ENCODE measurements at regions of chr3 and their contacts with region 1.

Region 1: DNA sequence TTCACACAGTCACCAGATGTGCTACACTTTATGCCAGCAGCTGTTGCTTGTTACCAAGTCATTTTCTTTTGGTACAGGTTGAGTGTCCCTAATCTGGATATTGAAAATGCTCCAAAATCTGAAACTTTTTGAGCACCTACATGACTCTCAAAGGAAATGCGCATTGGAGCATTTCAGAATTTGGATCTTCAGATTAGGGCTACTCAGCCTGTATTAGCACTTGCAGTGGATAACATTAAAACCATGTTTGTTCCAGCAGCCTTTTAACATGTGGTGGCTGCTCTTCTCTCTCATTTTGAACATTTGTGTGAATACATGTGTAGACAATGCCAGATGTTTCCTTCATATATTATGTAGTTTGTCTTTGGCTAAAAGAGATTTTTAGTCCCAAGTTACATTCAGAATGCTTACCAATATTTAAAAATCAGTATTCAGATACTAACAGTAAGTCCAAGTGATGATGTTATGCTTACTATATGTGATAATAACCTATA is 230.9 kb upstream of the UBE2E1 start:
- DNase-seq: no peak
- ATAC-seq: no peak
- H3K4me3 ChIP-seq: no peak overlapping the region
- H3K27ac ChIP-seq: no peak overlapping the region
- H3K4me1 ChIP-seq: no peaks in the 10 kb centered on the region; the same call in 1 of the 2 replicates
- H3K27me3 ChIP-seq: no peaks in the 10 kb centered on the region
- CTCF ChIP-seq: no peak
- POLR2A ChIP-seq: no peak
- RAD21 ChIP-seq: no peak

Region 2: GRCh38 chr3:23264413-23264812 is 310.5 kb before region 1 on chr3:
- CTCF ChIA-PET with region 1: no interaction called
- POLR2A ChIA-PET with region 1: no interaction called
- dilution Hi-C with region 1: no loop called
- in situ Hi-C with region 1: no loop called
- intact Hi-C with region 1: no loop called
- DNase-seq: peak; percentile 80
- ATAC-seq: peak; percentile 72
- H3K4me3 ChIP-seq: no peak overlapping the region
- H3K27ac ChIP-seq: no peak overlapping the region
- H3K4me1 ChIP-seq: peaks cover 6% of the 10 kb centered on the region; the same call in 1 of the 2 replicates
- H3K27me3 ChIP-seq: no peaks in the 10 kb centered on the region
- CTCF ChIP-seq: no peak
- POLR2A ChIP-seq: no peak
- RAD21 ChIP-seq: no peak

Region 3: GRCh38 chr3:23444855-23445254 is 130.0 kb before region 1 on chr3:
- CTCF ChIA-PET with region 1: no interaction called
- POLR2A ChIA-PET with region 1: no interaction called
- dilution Hi-C with region 1: no loop called
- in situ Hi-C with region 1: no loop called
- intact Hi-C with region 1: loop called (anchors 5 kb)
- DNase-seq: no peak
- ATAC-seq: no peak
- H3K4me3 ChIP-seq: no peak overlapping the region
- H3K27ac ChIP-seq: no peak overlapping the region
- H3K4me1 ChIP-seq: peaks cover 4% of the 10 kb centered on the region; the same call in 1 of the 2 replicates
- H3K27me3 ChIP-seq: no peaks in the 10 kb centered on the region
- CTCF ChIP-seq: no peak
- POLR2A ChIP-seq: no peak
- RAD21 ChIP-seq: no peak

Region 4: DNA sequence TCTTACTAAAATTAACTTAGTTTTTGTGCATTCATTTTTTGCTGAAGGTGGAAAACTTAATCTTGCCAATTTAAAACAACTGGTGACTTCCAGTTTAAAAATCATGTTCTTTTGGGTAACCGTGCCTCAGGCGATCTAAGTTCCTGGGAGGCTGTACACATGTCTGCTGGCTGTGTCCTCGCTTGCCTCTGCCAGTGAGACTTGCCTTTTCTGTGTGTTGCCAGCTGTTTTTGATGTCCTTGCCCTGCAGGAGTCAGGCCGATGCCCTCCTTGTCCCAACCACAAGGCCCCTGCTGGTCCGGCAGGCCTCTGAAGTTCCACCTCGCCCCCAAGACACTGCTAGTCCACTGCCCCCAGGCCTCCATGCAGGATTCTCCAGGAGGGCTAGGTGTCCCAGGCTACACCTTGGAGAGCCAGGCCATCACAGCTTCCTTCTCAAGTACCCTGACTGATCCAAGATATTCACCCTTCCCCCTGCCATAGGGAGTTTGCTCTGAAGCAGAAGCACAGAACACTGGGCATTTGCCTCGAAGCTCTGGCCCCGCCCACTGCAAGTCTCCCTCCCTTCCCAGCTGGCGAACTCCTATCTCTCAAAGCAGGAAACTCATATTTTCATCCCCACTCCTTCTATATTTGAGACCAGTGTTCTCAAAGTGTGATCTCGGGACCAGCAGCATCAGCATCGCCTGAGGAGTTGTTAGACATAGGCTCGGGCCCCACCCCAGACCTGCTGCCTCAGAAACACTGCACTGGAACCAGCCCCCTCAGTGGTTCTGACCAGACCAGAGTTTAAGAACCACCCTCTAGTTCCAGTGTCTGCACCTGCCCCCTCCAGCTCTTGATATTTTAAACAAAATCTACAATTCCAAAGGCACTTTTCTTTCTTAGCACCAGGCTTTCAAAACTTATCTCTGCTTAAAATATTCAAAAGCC is 45.1 kb after region 1 on chr3:
- CTCF ChIA-PET with region 1: no interaction called
- POLR2A ChIA-PET with region 1: no interaction called
- dilution Hi-C with region 1: no loop called
- in situ Hi-C with region 1: no loop called
- intact Hi-C with region 1: no loop called
- DNase-seq: no peak
- ATAC-seq: no peak
- H3K4me3 ChIP-seq: no peak overlapping the region
- H3K27ac ChIP-seq: no peak overlapping the region
- H3K4me1 ChIP-seq: no peaks in the 10 kb centered on the region
- H3K27me3 ChIP-seq: no peaks in the 10 kb centered on the region
- CTCF ChIP-seq: no peak
- POLR2A ChIP-seq: no peak
- RAD21 ChIP-seq: no peak

Region 5: GRCh38 chr3:23726811-23727548 is 152.1 kb after region 1 on chr3:
- CTCF ChIA-PET with region 1: no interaction called
- POLR2A ChIA-PET with region 1: no interaction called
- dilution Hi-C with region 1: no loop called
- in situ Hi-C with region 1: no loop called
- intact Hi-C with region 1: no loop called
- DNase-seq: no peak
- ATAC-seq: no peak
- H3K4me3 ChIP-seq: no peak overlapping the region
- H3K27ac ChIP-seq: no peak overlapping the region
- H3K4me1 ChIP-seq: peaks cover 13% of the 10 kb centered on the region
- H3K27me3 ChIP-seq: peaks cover 2% of the 10 kb centered on the region
- CTCF ChIP-seq: no peak
- POLR2A ChIP-seq: no peak
- RAD21 ChIP-seq: no peak

Region 6: DNA sequence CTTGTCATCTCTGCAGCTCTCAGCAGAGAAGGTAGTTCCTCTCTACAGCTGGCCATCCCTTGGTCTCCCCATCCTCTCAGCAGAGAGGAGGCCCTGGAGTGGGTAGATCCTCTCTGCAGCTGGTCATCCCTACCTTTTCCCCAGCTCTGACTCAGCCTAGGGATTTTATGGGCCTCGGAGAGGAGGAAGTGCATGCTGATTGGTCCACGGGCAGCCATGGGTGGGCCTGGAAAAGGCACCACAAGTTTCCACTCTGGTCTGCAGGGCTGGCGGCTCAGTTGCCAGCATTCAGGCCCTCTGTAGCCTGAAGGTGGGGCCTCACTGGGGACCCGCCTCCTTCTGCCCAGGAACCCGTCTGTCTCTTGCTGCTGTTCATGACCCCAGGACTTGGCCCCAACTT is 407.1 kb after region 1 on chr3:
- CTCF ChIA-PET with region 1: no interaction called
- POLR2A ChIA-PET with region 1: no interaction called
- dilution Hi-C with region 1: no loop called
- in situ Hi-C with region 1: no loop called
- intact Hi-C with region 1: no loop called
- DNase-seq: no peak
- ATAC-seq: no peak
- H3K4me3 ChIP-seq: no peak overlapping the region
- H3K27ac ChIP-seq: no peak overlapping the region
- H3K4me1 ChIP-seq: peaks cover 2% of the 10 kb centered on the region; the same call in 1 of the 2 replicates
- H3K27me3 ChIP-seq: no peaks in the 10 kb centered on the region
- CTCF ChIP-seq: no peak
- POLR2A ChIP-seq: no peak
- RAD21 ChIP-seq: no peak